ENCODE measurements at regions of chr1 and their contacts with region 1.

Region 1: DNA sequence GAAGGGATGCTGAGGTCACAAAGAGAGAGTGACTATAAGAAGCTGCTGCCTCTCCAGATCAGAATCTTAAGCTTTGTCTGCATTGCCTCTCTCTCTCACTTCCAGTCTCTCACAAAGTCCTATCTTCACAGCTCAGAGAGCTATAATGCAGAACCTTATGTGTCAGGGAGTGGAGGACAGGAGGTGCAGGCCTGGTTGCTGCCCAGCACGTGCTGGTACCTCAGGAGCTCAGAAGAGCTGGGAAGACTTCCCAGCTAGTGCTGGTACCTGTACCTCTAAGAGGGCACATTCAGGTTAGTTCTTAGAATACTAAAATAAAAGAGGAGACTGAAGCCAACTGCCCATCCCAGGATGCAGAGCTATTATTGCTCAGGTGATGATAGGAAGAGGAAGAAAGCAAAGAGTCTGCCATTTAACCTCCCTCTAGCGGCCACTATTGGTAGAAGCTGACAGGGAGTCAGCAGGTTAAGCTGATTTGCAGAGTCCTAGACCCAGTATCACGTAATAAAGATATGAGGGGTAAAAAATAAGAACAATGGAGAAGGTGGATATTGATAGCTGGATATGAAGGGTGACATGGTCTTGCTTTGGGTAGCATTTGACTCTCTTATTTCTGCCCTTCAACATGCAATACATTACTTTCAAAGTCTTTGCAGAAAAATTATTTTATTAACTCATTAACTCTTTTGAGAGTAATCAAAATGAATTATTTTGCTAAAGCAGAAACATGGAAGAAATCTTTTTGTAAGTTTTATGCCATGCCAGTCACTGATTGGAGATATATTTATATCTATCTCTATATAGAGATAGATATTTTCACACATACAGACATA is 138.1 kb upstream of the HMCN1 start:
- H3K4me3 ChIP-seq: no peak overlapping the region
- H3K27ac ChIP-seq: no peak overlapping the region
- H3K4me1 ChIP-seq: no peaks in the 10 kb centered on the region
- CTCF ChIP-seq: 0 out of 2 replicates have a peak, but pooled peaks have one; percentile 12

Region 2: DNA sequence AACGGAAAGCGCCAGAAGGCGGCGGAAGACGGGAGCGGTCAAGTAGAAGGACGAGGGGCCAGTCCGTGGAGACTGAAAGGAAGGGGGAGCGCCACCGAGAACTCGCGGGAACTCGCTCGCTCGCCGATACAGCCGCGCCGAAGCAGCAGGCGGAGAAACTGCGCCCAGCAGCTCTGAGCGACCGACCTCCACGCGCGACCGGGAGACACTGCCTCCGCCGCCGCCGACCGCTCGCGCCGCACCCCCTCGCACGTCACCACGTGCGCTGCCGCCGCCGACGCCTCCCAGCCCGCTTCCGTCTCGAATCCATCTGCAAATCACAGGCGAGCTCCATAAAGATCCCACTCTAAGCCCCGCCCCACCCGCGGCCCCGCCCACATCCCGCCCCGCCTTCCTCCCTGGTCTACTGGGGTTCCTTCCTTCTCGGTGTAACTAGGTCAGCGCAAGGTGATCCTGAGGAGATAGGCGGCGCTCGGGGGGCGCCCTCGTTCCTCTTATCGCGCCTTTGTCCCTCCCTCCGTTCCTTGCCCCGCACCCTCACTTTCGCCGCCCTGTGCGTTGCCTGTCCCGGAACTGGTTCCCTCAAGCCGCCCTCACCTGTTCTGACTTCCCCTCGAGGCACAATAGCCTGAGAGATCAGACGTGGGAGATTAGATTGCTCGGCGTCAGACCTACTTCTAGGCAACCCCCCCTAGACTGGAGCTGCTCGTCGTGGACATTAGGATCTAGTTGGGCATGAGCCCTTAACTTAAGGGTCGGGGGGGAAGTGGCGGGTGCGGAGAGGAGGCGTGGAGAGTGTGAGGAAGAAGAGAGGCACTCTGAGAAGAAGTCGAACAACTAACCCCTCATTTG is 278.8 kb before region 1 on chr1 and contains the start of gene IVNS1ABP:
- CTCF ChIA-PET with region 1: interaction called, 7 read pairs
- POLR2A ChIA-PET with region 1: interaction called, 10 read pairs
- H3K4me3 ChIP-seq: peak within 1 kb of the TSS; percentile 91
- H3K27ac ChIP-seq: peak within 1 kb of the TSS; percentile 90
- H3K4me1 ChIP-seq: peaks cover 9% of the 10 kb centered on the region
- CTCF ChIP-seq: peak; percentile 80

Region 3: DNA sequence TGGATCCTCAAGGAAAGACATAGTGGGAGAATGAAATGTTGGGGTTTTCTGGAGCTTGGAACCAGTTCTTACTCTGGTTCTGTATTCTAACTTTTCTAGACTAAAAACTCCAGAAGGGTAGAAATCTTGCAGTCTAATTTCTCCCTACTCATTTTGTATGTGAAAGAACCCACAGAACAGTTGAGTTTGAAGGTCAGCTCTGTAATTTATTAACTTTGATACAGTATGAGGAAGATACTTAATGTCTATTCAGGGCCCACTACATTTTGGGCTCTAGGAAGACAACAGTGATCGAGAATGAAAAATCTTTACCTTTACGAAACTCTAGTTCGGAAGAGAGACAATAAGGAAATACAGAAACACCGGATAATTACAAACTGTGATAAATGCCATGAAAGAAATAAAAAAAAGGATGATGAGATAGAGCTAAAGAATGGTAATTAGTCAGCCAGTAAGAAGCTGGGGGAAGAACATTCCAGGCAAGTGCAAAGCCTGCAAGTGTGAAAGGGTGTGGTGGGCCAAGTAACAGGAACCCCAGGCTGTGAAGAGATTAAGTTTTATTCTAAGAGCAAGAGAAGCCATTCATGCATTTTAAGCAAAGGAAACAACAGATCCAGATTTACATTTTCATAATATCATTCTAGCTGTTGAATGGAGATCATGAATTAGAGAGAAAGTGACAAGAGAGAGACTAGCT is 21.8 kb before region 1 on chr1:
- CTCF ChIA-PET with region 1: interaction called, 10 read pairs
- POLR2A ChIA-PET with region 1: no interaction called
- H3K4me3 ChIP-seq: no peak overlapping the region
- H3K27ac ChIP-seq: no peak overlapping the region
- H3K4me1 ChIP-seq: no peaks in the 10 kb centered on the region
- CTCF ChIP-seq: no peak

Region 4: GRCh38 chr1:185608177-185608576 is 12.1 kb after region 1 on chr1:
- CTCF ChIA-PET with region 1: interaction called, 11 read pairs
- POLR2A ChIA-PET with region 1: no interaction called
- H3K4me3 ChIP-seq: no peak overlapping the region
- H3K27ac ChIP-seq: no peak overlapping the region
- H3K4me1 ChIP-seq: no peaks in the 10 kb centered on the region
- CTCF ChIP-seq: no peak

Region 5: DNA sequence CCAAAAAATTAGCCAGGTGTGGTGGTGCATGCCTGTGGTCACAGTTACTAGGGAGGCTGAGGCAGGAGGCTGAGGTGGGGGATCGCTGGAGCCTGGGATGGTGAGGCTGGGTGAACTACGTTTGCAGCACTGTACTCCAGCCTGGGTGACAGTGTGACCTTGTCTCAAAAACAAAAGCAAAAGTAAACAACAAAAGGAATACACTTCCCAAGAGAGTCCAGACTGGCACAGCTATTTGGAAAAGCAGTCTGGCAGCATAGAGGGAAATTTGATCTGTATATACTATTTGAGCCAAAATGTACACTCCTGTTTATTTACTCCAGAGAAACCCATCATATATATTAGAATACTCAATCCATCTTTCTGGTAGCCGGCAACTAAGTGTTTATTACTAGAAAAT is 31.1 kb after region 1 on chr1:
- CTCF ChIA-PET with region 1: no interaction called
- POLR2A ChIA-PET with region 1: no interaction called
- H3K4me3 ChIP-seq: no peak overlapping the region
- H3K27ac ChIP-seq: no peak overlapping the region
- H3K4me1 ChIP-seq: no peaks in the 10 kb centered on the region
- CTCF ChIP-seq: no peak

Region 6: GRCh38 chr1:185694081-185694480 is 98.0 kb after region 1 on chr1:
- CTCF ChIA-PET with region 1: interaction called, 10 read pairs
- POLR2A ChIA-PET with region 1: no interaction called
- H3K4me3 ChIP-seq: no peak overlapping the region
- H3K27ac ChIP-seq: no peak overlapping the region
- H3K4me1 ChIP-seq: no peaks in the 10 kb centered on the region
- CTCF ChIP-seq: no peak

Measured in HEK293 (cell line).